Dorsolateral prefrontal cortex (tissue), 120 donors: ENCODE measurements at regions of chr10 and their contacts with region 1.

Region 1: DNA sequence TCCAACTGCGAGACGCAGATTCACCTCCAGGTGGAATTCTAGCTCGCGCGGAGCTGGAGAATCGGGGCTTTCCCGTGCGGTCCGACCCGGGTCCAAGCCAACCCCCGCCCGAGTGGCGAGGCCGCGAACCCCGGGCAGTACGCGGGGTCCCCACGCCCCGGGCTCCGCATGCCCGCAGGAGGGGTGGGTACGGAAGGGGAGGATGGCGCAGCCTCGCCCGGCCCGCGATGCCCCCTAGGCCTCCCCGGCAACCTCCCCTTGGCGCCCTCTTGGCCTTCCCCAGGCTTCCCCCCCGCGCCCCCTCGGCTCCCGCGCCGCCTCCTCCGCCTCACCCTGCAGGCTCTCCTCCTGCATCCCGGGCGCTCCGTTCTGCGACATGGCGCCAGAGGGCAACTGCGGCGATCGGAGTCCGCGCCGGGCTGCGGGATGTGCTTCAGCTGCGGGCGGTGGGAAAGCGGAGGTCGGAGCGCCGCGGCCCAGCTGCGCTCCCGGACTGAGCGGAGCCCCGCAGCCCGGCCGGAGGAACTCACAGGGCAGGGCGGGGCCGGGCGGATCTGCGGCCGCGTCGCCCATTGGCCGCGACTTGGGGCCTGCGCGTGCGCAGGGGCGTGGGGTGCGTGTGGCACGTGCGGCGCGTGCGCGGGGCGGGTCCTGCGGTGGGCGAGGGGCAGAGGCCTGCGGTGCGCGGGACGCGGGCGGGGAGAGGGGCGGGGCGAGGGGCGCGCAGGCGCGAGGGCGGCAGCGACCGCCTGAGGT is at the start of gene BNIP3:
- DNase-seq: peak; percentile 75 to 97 (median 88)
- H3K4me3 ChIP-seq: peak within 1 kb of the TSS; percentile 59 to 99 (median 92)
- H3K27ac ChIP-seq: peak within 1 kb of the TSS in 58 of 59 donors; percentile 20 to 94 (median 81)
- H3K27me3 ChIP-seq: no peaks in the 10 kb centered on the region
- CTCF ChIP-seq: peak in 6 of 56 donors; percentile 7 to 18 (median 11)
- total RNA-seq, gene BNIP3: 73.1 to 211 (median 119) TPM

Region 2: DNA sequence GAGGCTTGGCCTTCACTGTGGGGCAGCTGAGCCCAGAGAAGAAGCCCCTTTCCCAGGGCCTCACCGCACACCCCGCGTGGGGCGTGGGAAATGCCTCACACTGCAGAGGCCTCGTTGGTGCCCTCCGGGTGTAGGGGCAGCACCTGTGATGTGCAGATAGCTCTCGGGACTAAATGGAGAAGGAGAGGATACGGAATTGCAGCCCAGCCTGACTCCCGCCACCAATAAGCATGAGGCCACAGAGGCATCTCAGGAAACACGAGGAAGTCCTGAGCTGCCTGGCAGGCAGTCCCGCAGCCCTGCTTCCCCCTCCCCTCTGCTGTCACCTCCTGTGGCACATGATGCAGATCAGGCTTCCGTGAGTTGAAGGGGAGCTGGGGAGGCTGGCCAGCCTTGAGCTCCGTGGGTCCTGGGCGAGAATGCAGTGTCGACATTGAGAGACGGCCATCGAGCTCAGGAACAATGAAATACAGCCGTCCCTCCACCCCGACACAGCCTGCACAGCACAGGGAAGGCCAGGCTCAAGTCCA is 140.4 kb before region 1 on chr10:
- intact Hi-C with region 1: no loop called
- DNase-seq: peak in 5 of 10 donors; percentile 5 to 23 (median 20)
- H3K4me3 ChIP-seq: no peak overlapping the region
- H3K27ac ChIP-seq: no peak overlapping the region
- H3K27me3 ChIP-seq: no peaks in the 10 kb centered on the region
- CTCF ChIP-seq: no peak

Region 3: GRCh38 chr10:131900350-131901146 is 81.1 kb before region 1 on chr10 and contains the start of gene PPP2R2D:
- intact Hi-C with region 1: loop called (anchors 2 to 5 kb)
- DNase-seq: peak; percentile 86 to 97 (median 94)
- H3K4me3 ChIP-seq: peak within 1 kb of the TSS; percentile 56 to 99 (median 91)
- H3K27ac ChIP-seq: peak within 1 kb of the TSS in 58 of 59 donors; percentile 8 to 95 (median 86)
- H3K27me3 ChIP-seq: no peaks in the 10 kb centered on the region
- CTCF ChIP-seq: peak in 23 of 56 donors; percentile 8 to 49 (median 27)
- total RNA-seq, gene PPP2R2D: 37.7 to 70.2 (median 51.6) TPM

Region 4: DNA sequence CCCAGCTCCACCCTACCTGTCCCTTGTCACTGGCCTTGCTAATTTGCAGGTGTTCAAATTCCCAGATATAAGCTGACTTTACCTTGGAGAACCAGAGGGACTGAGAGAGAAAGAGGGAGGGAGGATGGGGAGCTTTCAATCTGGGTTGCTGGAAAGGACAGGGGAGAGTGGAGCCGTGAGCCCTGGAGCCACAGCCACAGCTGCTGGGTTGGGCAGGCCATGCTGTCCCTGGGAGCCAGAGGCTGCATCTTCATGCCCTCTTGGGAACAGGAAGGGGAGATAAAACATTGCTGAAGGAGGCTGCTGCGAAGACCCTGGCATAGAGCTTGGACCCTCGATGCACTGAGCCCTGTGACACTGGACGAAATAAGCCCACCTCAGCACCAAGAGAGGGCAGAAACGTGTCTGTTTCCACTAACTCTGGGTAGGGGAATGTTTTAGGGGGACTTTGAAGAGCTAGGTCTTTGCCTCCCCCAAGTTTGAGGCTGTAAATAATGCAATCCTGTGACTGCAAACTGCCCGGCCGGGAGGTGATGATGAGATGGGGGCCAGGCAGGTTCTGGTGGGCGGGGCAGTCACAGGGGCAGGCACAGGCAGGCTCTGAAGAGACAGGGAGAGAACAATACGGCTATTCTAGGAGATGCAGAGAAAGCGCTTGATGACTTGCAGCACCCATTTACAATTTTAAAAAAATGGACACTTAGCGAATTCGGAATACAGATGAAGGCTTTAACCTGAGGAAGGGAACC is 78.3 kb after region 1 on chr10:
- intact Hi-C with region 1: loop called in 1 of 2 experiments (anchors 5 kb)
- DNase-seq: peak in 4 of 10 donors; percentile 65 to 78 (median 70)
- H3K4me3 ChIP-seq: peak overlapping the region in 2 of 59 donors; percentile 9 to 18
- H3K27ac ChIP-seq: peak overlapping the region; percentile 13 to 100 (median 97)
- H3K27me3 ChIP-seq: no peaks in the 10 kb centered on the region
- CTCF ChIP-seq: no peak

Region 5: DNA sequence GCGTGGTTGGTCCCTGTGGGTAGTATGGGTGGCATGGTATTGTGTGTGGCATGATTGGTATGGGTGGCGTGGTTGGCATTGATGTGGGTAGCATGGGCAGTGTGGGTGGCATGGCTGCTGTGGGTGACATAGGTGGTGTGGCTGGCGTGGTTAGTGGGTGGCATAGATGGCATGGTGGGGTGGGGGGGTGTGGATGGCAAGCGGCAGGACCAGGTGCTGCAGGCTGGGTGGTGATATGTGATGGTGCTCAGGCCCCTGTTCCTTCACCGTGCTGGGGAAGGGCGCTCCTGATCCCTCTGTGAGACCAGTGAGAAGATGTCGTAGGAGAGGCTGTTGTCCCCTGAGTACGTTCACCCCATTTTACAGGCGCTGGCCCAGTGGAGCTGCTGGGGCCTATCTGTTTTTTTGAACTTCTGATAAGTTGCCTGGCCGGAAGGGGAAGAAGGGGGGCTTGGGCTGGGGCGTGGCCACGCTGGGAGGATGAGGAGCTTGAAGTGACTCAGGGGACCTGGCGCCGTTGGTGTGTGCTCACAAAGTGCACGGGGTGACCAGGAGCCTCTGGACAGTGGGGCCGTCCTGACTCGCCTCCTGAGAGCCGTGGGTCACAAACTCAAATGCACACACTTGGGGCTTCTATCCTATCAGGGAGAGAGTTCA is 573.5 kb after region 1 on chr10:
- intact Hi-C with region 1: no loop called
- DNase-seq: peak in 2 of 10 donors; percentile 2 to 22
- H3K4me3 ChIP-seq: no peak overlapping the region
- H3K27ac ChIP-seq: no peak overlapping the region
- H3K27me3 ChIP-seq: no peaks in the 10 kb centered on the region
- CTCF ChIP-seq: no peak